PC-9 (cell line): ENCODE measurements at regions of chr4 and their contacts with region 1.

Region 1: GRCh38 chr4:187209921-187210613 is 486.4 kb upstream of the FAT1 start:
- DNase-seq: no peak
- H3K4me3 ChIP-seq: no peak overlapping the region
- H3K27ac ChIP-seq: no peak overlapping the region
- H3K4me1 ChIP-seq: no peaks in the 10 kb centered on the region
- H3K27me3 ChIP-seq: no peaks in the 10 kb centered on the region
- CTCF ChIP-seq: no peak

Region 2: DNA sequence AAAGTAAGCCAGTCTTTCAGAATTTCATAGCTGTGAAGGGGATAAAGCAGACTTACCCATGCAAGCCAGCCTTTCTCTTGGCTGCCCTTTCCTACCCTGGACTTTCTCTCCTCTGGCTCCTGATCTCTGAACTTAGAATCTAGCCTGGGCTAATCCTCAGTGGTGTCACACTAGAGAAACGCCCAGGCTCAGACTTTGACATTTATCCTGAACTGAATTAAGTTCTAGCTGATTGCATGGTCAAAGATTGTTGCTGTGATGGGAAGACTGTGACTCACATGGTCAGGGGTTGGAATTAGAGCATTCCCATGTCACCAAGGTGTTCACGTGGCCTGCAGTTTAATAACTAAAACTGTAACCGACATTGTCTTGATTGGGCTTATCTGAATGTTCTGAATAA is 16.9 kb before region 1 on chr4:
- CTCF ChIA-PET with region 1: no interaction called
- POLR2A ChIA-PET with region 1: interaction called, 20 read pairs
- intact Hi-C with region 1: no loop called
- DNase-seq: no peak
- H3K4me3 ChIP-seq: no peak overlapping the region
- H3K27ac ChIP-seq: no peak overlapping the region
- H3K4me1 ChIP-seq: no peaks in the 10 kb centered on the region
- H3K27me3 ChIP-seq: no peaks in the 10 kb centered on the region
- CTCF ChIP-seq: no peak